ENCODE measurements at regions of chr6 and their contacts with region 1.

Region 1: GRCh38 chr6:43361269-43361668 is 8.2 kb downstream of the ZNF318 start:
- DNase-seq: peak; percentile 23
- H3K4me3 ChIP-seq: no peak overlapping the region
- H3K27ac ChIP-seq: no peak overlapping the region
- H3K4me1 ChIP-seq: peaks cover 21% of the 10 kb centered on the region
- CTCF ChIP-seq: peak; percentile 60; the same call in 1 of the 2 replicates

Region 2: GRCh38 chr6:43247113-43247999 is 113.9 kb before region 1 on chr6:
- CTCF ChIA-PET with region 1: interaction called, 25 read pairs
- POLR2A ChIA-PET with region 1: no interaction called
- intact Hi-C with region 1: no loop called
- DNase-seq: peak; percentile 89
- H3K4me3 ChIP-seq: peak overlapping the region; percentile 72
- H3K27ac ChIP-seq: no peak overlapping the region
- H3K4me1 ChIP-seq: peaks cover 20% of the 10 kb centered on the region
- CTCF ChIP-seq: peak; percentile 27; the same call in 1 of the 2 replicates

Region 3: DNA sequence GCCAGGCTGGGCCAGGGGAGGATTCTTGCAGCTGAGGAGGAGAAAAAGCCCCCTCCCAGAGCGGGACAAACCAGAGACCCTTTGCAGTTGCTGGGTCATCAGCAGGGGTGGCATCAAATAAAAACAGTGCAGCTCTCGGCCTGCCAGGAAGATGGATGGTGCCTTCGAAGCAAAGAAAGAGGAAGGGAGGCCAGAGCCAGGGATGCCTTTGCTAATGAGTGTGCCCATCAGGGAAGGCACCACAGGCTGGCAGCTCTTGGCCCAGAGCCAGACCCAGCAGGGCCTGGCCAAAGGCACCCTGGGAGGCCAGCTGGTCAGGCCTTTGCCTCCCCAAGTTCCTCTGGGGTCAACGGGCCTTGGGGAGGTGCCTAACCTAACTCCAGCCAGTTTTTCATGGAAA is 34.5 kb after region 1 on chr6:
- CTCF ChIA-PET with region 1: no interaction called
- POLR2A ChIA-PET with region 1: no interaction called
- intact Hi-C with region 1: loop called (anchors 5 kb)
- DNase-seq: no peak
- H3K4me3 ChIP-seq: no peak overlapping the region
- H3K27ac ChIP-seq: no peak overlapping the region
- H3K4me1 ChIP-seq: peaks cover 26% of the 10 kb centered on the region
- CTCF ChIP-seq: no peak

Region 4: DNA sequence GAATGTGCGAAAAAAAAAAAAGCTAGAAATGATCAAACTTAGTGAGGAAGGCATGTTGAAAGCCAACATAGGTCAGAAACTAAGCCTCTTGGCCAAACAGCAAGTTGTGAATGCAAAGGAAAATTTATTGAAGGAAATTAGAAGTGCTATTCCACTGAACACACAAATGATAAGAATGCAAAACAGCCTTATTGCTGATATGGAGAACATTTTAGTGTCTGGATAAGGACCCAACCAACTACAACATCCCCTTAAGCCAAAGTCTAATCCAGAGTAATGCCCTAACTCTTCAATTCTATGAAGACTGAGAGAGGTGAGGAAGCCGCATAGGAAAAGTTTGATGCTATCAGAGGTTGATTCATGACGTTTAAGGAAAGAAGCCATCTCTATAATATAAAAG is 60.6 kb after region 1 on chr6:
- CTCF ChIA-PET with region 1: no interaction called
- POLR2A ChIA-PET with region 1: no interaction called
- intact Hi-C with region 1: no loop called
- DNase-seq: no peak
- H3K4me3 ChIP-seq: no peak overlapping the region
- H3K27ac ChIP-seq: no peak overlapping the region
- H3K4me1 ChIP-seq: peaks cover 2% of the 10 kb centered on the region
- CTCF ChIP-seq: no peak

Measured in OCI-LY7 (cell line).